ENCODE measurements at regions of chr1 and their contacts with region 1.

Region 1: DNA sequence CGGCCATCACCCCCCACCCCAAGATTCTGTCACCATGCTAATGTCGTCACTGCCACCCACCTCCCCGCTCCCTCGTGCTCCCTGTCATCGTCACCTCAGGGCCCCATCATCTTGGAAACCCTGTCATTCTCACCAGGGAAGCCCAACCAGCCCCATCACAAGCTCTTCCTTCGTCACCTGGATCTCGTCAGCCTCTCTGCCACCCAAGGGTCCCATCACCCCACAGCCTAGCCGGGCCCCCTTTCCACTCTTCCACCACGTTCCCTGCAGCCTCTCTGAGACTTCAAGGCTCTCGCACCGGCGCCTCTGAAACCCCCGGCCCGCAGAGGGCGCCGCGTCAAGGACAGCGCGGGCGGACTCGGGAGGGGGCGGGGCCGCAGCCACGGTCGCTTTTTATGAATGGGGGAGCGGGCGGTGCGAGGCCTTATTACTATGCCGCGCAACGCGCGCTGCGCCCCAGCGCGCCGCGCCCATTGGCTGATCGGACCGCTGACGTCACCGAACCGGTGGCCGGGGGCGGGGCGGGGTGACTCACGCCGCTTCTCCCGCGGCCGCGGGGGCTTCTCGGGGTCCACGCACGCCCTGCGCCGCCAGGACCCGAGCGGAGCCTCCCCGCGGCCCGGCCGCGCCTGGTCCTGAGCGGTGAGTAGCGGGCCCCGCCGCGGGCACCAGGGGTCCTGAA is at the start of gene GPR3:
- DNase-seq: peak; percentile 89 to 91
- H3K4me3 ChIP-seq: peak within 1 kb of the TSS in 2 of 3 donors; percentile 10 to 45
- H3K27ac ChIP-seq: peak within 1 kb of the TSS in 2 of 3 donors; percentile 40 to 58
- H3K4me1 ChIP-seq: peaks cover 19 to 23% of the 10 kb centered on the region in 2 donors
- H3K27me3 ChIP-seq: no peaks in the 10 kb centered on the region
- CTCF ChIP-seq: peak in 4 of 6 experiments; percentile 23 to 50 (median 42)
- POLR2A ChIP-seq: peak in 1 of 2 donors; percentile 30
- total RNA-seq, gene GPR3: 0.11 to 2.1 (median 0.60) TPM

Region 2: GRCh38 chr1:27102707-27103491 is 289.3 kb before region 1 on chr1:
- intact Hi-C with region 1: loop called (anchors 10 kb)
- DNase-seq: peak; percentile 67 to 68
- H3K4me3 ChIP-seq: no peak overlapping the region
- H3K27ac ChIP-seq: no peak overlapping the region
- H3K4me1 ChIP-seq: peaks cover 5 to 21% of the 10 kb centered on the region in 2 donors
- H3K27me3 ChIP-seq: no peaks in the 10 kb centered on the region
- CTCF ChIP-seq: peak; percentile 92 to 98 (median 96)
- POLR2A ChIP-seq: no peak

Region 3: DNA sequence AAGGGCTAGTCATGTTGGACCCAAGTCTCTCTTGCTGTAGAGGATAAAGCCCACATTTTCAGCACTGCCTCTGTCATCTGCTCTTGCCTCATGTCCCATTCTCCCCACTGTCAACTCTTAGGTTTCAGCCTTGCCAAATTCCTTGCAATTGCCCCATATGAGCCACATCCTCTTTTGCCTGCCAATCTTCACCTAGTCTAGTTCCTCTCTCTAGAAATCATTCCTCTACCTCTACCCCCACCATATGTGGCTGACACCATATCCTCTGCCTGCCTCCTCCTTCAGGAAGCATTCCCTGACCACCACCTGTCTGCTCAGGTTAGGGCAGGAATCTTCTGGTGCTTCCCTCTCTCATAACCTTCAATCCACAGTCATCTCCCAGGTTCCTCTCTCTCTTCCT is 275.5 kb before region 1 on chr1:
- intact Hi-C with region 1: no loop called
- DNase-seq: no peak
- H3K4me3 ChIP-seq: no peak overlapping the region
- H3K27ac ChIP-seq: peak overlapping the region in 1 of 3 donors; percentile 69
- H3K4me1 ChIP-seq: peaks cover 0 to 60% of the 10 kb centered on the region in 2 donors
- H3K27me3 ChIP-seq: no peaks in the 10 kb centered on the region
- CTCF ChIP-seq: no peak
- POLR2A ChIP-seq: no peak

Region 4: GRCh38 chr1:27300341-27301051 is 91.7 kb before region 1 on chr1:
- intact Hi-C with region 1: loop called (anchors 2 kb)
- DNase-seq: peak; percentile 77 to 80
- H3K4me3 ChIP-seq: no peak overlapping the region
- H3K27ac ChIP-seq: peak overlapping the region in 1 of 3 donors; percentile 61
- H3K4me1 ChIP-seq: peaks cover 0 to 22% of the 10 kb centered on the region in 2 donors
- H3K27me3 ChIP-seq: no peaks in the 10 kb centered on the region
- CTCF ChIP-seq: peak; percentile 96 to 99 (median 97)
- POLR2A ChIP-seq: no peak

Region 5: GRCh38 chr1:27357281-27358037 is 34.8 kb before region 1 on chr1:
- intact Hi-C with region 1: loop called (anchors 5 kb)
- DNase-seq: peak; percentile 69 to 71
- H3K4me3 ChIP-seq: no peak overlapping the region
- H3K27ac ChIP-seq: no peak overlapping the region
- H3K4me1 ChIP-seq: no peaks in the 10 kb centered on the region
- H3K27me3 ChIP-seq: no peaks in the 10 kb centered on the region
- CTCF ChIP-seq: peak; percentile 88 to 100 (median 94)
- POLR2A ChIP-seq: no peak

Region 6: GRCh38 chr1:27445177-27445936 is 53.1 kb after region 1 on chr1:
- intact Hi-C with region 1: no loop called
- DNase-seq: no peak
- H3K4me3 ChIP-seq: no peak overlapping the region
- H3K27ac ChIP-seq: no peak overlapping the region
- H3K4me1 ChIP-seq: peaks cover 12 to 21% of the 10 kb centered on the region in 2 donors
- H3K27me3 ChIP-seq: no peaks in the 10 kb centered on the region
- CTCF ChIP-seq: no peak
- POLR2A ChIP-seq: no peak

Region 7: DNA sequence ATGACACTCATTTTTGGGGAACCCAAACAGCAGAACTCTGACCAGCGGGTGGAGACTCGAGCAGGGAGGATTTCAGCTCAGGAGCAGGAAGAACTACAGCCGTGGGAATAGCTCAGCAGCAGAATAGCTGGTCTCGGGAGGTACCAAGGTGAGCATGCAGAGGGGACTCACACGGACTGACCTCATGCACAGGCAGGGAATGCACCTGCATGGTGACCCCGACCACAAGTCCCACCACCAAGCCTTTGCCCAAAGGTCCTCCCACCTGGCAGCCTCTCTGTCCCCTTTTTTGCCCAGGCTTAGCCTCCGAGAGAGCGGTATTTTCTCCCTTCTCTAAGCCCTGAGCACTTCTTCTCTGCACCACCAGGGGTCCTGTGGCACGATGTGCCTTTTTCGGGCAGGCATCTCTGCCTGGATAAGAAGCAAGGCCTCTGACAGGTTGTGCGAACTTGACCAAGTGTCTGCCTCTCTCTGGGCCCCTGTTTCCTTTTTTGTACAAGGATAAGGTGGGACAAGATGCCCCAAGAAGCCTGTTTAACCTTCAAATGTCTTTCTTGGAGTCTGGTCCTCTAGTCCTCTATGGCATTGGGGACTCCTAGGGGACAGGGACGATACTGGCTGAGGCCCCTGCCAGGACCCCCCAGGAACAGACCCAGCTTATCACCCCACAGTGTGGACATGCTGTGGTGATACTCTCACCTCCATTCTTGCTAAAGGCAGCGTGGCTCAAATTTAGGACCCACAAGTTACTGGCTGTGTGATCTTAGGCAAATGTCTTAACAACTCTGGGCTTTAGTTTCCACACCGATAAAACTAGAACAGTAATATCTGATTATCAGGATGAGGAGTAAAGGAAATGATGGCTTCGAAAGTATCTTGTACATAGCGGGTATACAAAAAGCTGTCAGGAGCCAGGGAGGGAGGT is 251.7 kb after region 1 on chr1:
- intact Hi-C with region 1: no loop called
- DNase-seq: peak; percentile 52 to 54
- H3K4me3 ChIP-seq: no peak overlapping the region
- H3K27ac ChIP-seq: no peak overlapping the region
- H3K4me1 ChIP-seq: peaks cover 0 to 4% of the 10 kb centered on the region in 2 donors
- H3K27me3 ChIP-seq: no peaks in the 10 kb centered on the region
- CTCF ChIP-seq: peak; percentile 37 to 79 (median 56)
- POLR2A ChIP-seq: no peak

Region 8: DNA sequence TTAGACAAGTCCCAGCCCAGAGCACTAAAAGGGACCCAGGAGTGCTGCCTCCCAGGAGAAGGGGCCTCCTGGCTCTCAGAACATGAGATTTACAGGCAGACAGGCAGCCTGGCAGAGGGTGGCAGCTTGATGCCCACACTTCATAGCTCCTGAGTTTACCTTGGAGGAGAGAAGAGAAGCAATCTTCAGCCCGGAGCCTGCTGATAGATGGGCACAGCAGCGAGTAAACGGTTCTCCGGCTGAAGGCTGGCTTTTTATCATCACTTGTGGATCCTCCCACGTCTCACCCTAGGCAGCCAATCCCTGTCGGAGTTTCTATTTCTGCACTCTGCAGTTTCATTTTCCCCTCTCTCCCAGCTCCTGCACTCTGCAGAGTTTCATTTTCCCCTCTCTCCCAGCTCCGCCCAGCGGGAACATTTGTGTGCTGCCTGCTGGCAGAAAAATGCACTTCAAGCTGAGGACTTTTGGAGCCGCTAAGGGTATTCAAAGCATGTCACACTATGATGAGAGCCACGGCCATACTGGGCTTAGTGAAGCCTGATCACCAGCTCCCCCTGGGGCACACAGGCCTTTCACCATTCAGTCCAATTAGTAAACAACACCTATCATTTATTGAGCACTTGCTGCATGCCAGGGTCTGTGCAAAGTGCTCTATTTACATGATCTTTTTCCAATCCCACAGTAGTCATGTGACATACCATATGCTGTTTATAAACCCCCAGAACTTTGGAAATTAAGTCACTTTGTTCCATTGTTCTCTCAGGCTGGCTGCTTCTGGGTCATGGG is 279.9 kb after region 1 on chr1 and contains the start of gene IFI6:
- intact Hi-C with region 1: loop called (anchors 5 kb)
- DNase-seq: peak; percentile 96 to 97
- H3K4me3 ChIP-seq: peak within 1 kb of the TSS in 2 of 3 donors; percentile 17 to 33
- H3K27ac ChIP-seq: peak within 1 kb of the TSS; percentile 86 to 92 (median 91)
- H3K4me1 ChIP-seq: peaks cover 16 to 31% of the 10 kb centered on the region in 2 donors
- H3K27me3 ChIP-seq: no peaks in the 10 kb centered on the region
- CTCF ChIP-seq: peak in 5 of 6 experiments; percentile 8 to 51 (median 43)
- POLR2A ChIP-seq: peak in 1 of 2 donors; percentile 84
- total RNA-seq, gene IFI6: 120 to 174 (median 150) TPM